MCF 10A (cell line): ENCODE measurements at regions of chr4 and their contacts with region 1.

Region 1: DNA sequence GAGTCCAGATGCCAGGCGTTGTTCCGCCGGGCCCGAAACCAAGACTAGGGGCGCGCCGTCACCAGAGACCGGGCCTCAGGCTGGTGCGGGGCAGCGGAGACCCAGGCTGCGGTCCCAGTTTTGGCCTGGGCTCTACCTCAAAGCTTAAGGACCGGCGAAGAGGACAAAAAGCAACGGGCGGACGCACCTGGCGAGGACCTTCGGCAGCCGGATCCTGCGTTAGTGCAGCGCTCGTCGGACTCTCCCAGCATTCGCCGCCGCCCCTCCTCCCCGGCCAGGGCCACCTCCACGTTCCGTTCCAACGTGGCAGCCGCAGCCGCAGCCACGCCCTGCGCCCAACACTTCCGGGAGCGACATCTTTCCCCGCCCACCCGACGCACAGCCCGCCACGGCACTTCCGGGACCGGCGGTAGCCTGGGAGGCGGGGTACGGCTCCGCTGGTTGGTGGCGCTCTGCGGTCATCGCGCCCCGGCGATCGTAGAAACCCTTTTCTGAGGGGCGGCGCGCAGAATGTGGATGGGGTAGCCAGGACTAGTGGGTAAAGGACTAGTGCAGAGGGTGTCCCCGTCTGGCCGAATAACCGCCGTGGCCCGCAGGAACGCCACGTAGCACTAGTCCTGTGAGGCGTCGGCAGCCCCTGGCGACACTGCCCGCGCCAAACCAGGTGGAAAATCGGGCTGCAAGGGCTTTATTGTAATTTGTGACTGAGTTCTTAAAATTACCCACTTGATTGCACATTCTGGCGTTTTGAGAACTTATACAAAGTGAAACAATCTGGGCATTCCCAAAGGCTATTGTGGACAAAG is at the start of gene SEC31A:
- DNase-seq: peak; percentile 95
- H3K4me3 Mint-ChIP-seq: peak within 1 kb of the TSS; percentile 86
- H3K27ac Mint-ChIP-seq: peak within 1 kb of the TSS; percentile 98
- H3K4me1 Mint-ChIP-seq: peaks cover 24% of the 10 kb centered on the region
- H3K27me3 Mint-ChIP-seq: no peaks in the 10 kb centered on the region
- CTCF ChIP-seq: no peak
- total RNA-seq, gene SEC31A: 212 and 229 TPM in 2 replicates

Region 2: GRCh38 chr4:82865592-82865991 is 25.5 kb before region 1 on chr4:
- CTCF ChIA-PET with region 1: no interaction called
- POLR2A ChIA-PET with region 1: interaction called, 10 read pairs
- intact Hi-C with region 1: no loop called
- DNase-seq: peak; percentile 86
- H3K4me3 Mint-ChIP-seq: peak overlapping the region; percentile 33
- H3K27ac Mint-ChIP-seq: peak overlapping the region; percentile 96
- H3K4me1 Mint-ChIP-seq: peaks cover 20% of the 10 kb centered on the region
- H3K27me3 Mint-ChIP-seq: no peaks in the 10 kb centered on the region
- CTCF ChIP-seq: no peak

Region 3: DNA sequence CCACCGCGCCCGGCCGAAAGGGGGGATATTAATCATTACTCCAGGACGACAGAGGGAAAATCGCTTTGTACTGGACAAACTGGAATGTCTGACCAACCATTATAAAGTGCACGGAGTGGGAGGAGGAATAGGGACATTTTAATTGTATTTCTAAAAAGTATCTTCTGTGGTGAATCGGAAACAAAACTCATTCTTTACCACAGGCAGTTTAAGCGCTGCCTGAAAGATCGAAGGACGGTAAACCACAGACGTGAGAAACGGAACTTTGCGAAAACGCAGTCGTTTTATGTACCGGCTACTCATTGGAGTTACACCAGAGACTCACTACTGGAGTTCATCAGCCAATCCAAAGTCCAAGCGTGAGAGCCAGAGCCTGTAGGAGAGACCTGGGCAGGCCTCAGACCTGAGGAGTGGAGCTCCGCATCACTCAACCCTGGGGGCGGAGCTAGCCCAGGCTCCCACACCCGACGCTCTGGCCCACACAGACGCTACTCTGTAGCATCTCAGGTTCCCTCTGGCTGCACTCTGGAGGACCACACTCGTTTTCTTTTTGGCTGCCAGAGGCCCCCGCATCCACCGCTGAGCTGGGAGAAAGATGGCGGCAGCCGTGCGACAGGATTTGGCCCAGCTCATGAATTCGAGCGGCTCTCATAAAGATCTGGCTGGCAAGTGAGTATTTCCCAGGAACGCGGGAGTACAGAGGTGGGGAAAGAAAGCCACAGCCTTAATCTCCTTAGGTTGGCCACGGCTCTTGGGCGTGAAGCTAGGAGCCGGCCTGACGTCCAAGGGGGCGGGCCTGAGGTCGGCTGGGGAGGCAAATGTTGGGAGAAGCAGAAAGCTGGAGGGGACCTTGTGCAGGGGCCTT is 143.8 kb after region 1 on chr4 and contains the start of gene COPS4:
- CTCF ChIA-PET with region 1: no interaction called
- POLR2A ChIA-PET with region 1: interaction called, 15 read pairs
- intact Hi-C with region 1: no loop called
- DNase-seq: peak; percentile 100
- H3K4me3 Mint-ChIP-seq: peak within 1 kb of the TSS; percentile 96
- H3K27ac Mint-ChIP-seq: peak within 1 kb of the TSS; percentile 92
- H3K4me1 Mint-ChIP-seq: peaks cover 8% of the 10 kb centered on the region
- H3K27me3 Mint-ChIP-seq: no peaks in the 10 kb centered on the region
- CTCF ChIP-seq: no peak
- total RNA-seq, gene COPS4: 34.7 and 36.6 TPM in 2 replicates